ENCODE measurements at regions of chr6 and their contacts with region 1.

Region 1: GRCh38 chr6:37791156-37791919 is 28.2 kb upstream of the ZFAND3 start:
- DNase-seq: peak; percentile 93
- ATAC-seq: peak; percentile 98 to 99

Region 2: DNA sequence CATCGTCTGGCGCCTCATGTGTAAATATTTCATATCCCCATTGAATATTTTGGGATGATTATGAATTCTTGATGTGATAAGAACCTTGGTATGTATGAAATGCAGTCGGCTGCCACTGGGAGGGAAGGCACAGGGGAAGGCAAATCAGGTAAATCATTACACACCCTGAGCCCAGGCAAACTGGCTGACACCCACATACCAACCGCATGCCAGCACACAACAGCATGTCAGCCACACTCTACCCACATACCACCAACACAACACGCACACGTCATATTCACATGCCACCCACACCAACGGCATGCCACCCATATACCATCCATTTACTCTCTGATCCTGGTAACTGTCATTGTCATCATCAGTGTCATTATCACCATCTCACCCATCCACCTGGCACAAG is 65.4 kb before region 1 on chr6:
- intact Hi-C with region 1: no loop called
- DNase-seq: no peak
- ATAC-seq: peak; percentile 44 to 77

Region 3: GRCh38 chr6:37759745-37760144 is 31.6 kb before region 1 on chr6:
- intact Hi-C with region 1: no loop called
- DNase-seq: no peak
- ATAC-seq: no peak

Region 4: GRCh38 chr6:38001386-38001785 is 210.0 kb after region 1 on chr6:
- intact Hi-C with region 1: loop called in 1 of 2 experiments (anchors 5 kb)
- DNase-seq: no peak
- ATAC-seq: no peak

Region 5: DNA sequence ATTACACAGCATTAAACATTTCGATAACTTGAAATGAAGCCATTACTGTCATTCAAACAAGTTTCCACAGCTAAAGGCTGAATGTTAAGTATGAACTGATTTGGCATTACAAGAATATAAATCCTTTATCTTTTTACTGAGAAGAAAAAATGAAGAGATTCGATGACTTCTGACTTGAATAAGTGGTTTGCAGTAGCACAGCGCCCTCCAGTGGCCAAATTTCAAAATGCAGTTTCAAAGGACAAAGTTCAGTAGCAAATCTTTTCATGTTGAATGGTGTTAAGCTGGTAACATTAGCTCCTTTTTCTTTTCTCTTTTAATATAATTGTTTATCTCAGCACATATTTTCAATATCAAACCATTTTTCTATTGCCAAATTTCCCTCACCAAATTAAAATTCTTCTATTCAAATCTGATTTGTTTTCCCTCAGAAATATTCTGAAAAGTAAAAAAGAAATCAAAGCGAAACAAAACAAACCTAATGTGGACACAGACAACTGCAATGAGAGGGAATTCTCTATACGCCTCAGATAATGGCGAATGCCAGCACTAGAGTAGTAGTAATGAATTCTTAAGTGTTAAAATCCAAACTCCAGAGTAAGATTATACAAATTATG is 702.7 kb after region 1 on chr6:
- intact Hi-C with region 1: loop called in 1 of 2 experiments (anchors 10 kb)
- DNase-seq: peak; percentile 63
- ATAC-seq: peak in 1 of 2 donors; percentile 24